Heart right ventricle (tissue), 16 donors: ENCODE measurements at regions of chr20 and their contacts with region 1.

Region 1: GRCh38 chr20:10654630-10655029 is 19.2 kb downstream of the JAG1 start:
- DNase-seq: no peak
- ATAC-seq: peak in 4 of 8 donors; percentile 17 to 29 (median 22)
- H3K4me3 ChIP-seq: no peak overlapping the region
- H3K27ac ChIP-seq: peak overlapping the region in 8 of 10 donors; percentile 45 to 84 (median 72)
- H3K4me1 ChIP-seq: peaks cover 24 to 100% (median 81%) of the 10 kb centered on the region in 9 donors
- H3K27me3 ChIP-seq: no peaks in the 10 kb centered on the region
- CTCF ChIP-seq: no peak

Region 2: GRCh38 chr20:10447027-10447426 is 207.6 kb before region 1 on chr20:
- intact Hi-C with region 1: no loop called
- DNase-seq: no peak
- ATAC-seq: no peak
- H3K4me3 ChIP-seq: no peak overlapping the region
- H3K27ac ChIP-seq: peak overlapping the region in 1 of 10 donors; percentile 4
- H3K4me1 ChIP-seq: peaks cover 0 to 12% (median 0%) of the 10 kb centered on the region in 9 donors
- H3K27me3 ChIP-seq: no peaks in the 10 kb centered on the region
- CTCF ChIP-seq: no peak

Region 3: DNA sequence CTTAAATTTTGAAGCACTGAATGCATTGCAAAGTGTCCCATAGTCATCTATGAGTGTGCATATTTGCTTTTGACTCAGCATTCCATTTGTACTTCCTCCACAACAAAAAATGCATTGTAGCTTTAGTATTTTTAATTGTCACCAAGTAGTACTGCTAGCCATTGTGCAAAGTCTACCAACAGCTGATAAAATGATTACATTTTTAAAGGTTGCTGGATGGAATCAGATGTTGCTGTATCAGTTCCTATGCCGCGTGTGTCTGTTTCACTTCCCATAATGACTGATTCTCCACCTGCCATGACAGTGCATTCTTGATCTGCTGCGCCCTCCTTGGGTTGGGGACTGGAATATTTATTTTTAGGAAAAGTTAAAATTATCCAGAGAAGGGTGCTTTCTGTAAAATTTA is 178.3 kb before region 1 on chr20:
- intact Hi-C with region 1: loop called in 1 of 10 experiments (anchors 10 kb)
- DNase-seq: no peak
- ATAC-seq: peak in 6 of 8 donors; percentile 32 to 71 (median 48)
- H3K4me3 ChIP-seq: no peak overlapping the region
- H3K27ac ChIP-seq: no peak overlapping the region
- H3K4me1 ChIP-seq: peaks cover 0 to 44% (median 21%) of the 10 kb centered on the region in 9 donors
- H3K27me3 ChIP-seq: no peaks in the 10 kb centered on the region
- CTCF ChIP-seq: peak in 1 of 9 donors; percentile 22